AG04450 (cell line): ENCODE measurements at regions of chr3 and their contacts with region 1.

Region 1: DNA sequence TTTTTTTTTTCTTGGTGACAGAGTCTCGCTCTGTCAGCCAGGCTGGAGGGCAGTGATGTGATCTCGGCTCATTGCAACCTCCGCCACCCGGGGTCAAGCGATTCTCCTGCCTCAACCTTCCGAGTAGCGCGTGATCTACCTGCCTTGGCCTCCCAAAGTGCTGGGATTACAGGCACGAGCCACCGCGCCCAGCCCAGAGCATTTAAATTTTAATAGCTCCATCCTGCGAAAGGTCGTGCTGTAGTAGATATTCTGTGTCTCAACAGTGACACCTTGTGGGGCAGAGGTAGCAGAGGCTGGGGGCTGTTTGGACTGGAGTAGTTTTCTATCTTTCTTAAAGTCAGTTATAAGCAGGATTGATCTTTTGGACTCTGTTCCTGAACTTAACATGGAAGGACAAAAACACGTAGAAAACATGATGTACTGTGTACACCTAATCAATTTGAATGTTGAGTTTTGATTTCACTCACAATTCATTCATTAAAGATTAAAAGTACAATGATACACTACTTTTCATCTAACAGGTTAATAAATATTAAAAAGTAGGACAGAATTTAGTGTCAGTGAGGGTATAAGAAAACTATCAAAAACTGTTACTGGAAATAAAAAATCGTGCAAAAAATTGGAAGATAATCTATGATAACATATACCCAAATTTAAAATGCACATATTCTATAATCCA is 11.0 kb upstream of the PDCD6IP start:
- DNase-seq: peak; percentile 32
- H3K4me3 ChIP-seq: peak overlapping the region; percentile 49
- H3K27ac ChIP-seq: no peak overlapping the region
- H3K27me3 ChIP-seq: no peaks in the 10 kb centered on the region
- CTCF ChIP-seq: peak; percentile 88

Region 2: DNA sequence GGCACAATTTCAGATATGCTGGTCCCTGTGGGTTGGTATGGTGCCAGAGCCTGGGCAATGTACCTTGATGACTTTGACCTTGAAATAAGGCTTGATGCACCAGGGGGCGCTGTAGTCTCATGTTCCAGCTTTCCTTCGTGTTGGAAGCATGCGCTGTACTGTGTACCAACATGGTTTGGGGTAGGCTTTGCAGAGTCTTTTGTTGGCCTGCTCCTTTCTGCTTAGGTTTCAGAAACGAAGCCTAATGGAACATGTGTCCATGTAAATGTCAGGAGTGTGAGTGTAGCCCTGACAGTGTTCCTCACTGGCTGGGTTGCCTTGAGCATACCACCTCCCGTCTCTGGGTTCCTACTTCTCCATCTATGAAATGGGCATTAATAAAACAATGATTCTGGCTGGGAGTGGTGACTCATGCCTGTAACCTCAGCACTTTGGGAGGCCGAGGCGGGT is 839.7 kb before region 1 on chr3:
- CTCF ChIA-PET with region 1: interaction called, 15 read pairs
- POLR2A ChIA-PET with region 1: no interaction called
- DNase-seq: peak; percentile 51
- H3K4me3 ChIP-seq: no peak overlapping the region
- H3K27ac ChIP-seq: no peak overlapping the region
- H3K27me3 ChIP-seq: peaks cover 9% of the 10 kb centered on the region
- CTCF ChIP-seq: peak; percentile 84

Region 3: GRCh38 chr3:33385423-33385822 is 402.0 kb before region 1 on chr3:
- CTCF ChIA-PET with region 1: interaction called, 11 read pairs
- POLR2A ChIA-PET with region 1: no interaction called
- DNase-seq: no peak
- H3K4me3 ChIP-seq: no peak overlapping the region
- H3K27ac ChIP-seq: no peak overlapping the region
- H3K27me3 ChIP-seq: no peaks in the 10 kb centered on the region
- CTCF ChIP-seq: no peak

Region 4: GRCh38 chr3:33629219-33629618 is 158.2 kb before region 1 on chr3:
- CTCF ChIA-PET with region 1: interaction called, 22 read pairs
- POLR2A ChIA-PET with region 1: no interaction called
- DNase-seq: no peak
- H3K4me3 ChIP-seq: no peak overlapping the region
- H3K27ac ChIP-seq: no peak overlapping the region
- H3K27me3 ChIP-seq: no peaks in the 10 kb centered on the region
- CTCF ChIP-seq: no peak

Region 5: GRCh38 chr3:33645060-33645647 is 142.3 kb before region 1 on chr3:
- CTCF ChIA-PET with region 1: interaction called, 26 read pairs
- POLR2A ChIA-PET with region 1: no interaction called
- DNase-seq: no peak
- H3K4me3 ChIP-seq: no peak overlapping the region
- H3K27ac ChIP-seq: no peak overlapping the region
- H3K27me3 ChIP-seq: no peaks in the 10 kb centered on the region
- CTCF ChIP-seq: no peak

Region 6: DNA sequence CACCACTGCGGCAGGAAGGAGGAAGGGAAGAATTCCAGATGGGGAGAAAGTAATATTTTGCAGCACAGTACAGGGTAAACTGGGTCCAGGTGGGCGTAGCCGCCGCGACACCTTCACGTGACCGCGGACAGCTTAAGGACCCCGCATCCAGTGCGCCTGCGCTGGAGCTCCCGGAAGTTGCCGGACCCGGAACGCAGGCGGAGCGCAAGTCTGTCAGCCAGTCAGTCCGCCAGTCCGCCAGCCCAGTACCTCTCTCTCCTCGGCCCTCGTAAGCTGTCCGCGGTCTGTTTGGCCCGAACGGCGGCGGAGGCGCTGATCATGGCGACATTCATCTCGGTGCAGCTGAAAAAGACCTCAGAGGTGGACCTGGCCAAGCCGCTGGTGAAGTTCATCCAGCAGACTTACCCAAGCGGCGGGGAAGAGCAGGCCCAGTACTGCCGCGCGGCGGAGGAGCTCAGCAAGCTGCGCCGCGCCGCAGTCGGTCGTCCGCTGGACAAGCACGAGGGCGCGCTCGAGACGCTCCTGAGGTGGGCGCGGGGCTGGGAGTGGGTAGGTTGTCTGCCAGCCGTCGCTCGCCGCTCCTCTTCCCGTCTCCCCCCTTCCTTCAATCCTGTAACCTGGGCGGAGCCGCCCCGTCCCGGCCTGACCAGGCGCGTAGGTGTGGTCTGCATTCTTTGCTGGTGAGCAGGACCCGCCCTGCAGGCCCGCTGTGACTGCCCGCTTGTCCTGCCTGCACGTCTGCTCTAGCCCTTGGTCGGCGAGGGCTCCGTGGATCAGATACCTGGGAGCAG is 11.1 kb after region 1 on chr3 and contains the start of gene PDCD6IP:
- CTCF ChIA-PET with region 1: interaction called, 68 read pairs
- POLR2A ChIA-PET with region 1: interaction called, 3 read pairs
- DNase-seq: peak; percentile 82
- H3K4me3 ChIP-seq: peak within 1 kb of the TSS; percentile 76
- H3K27ac ChIP-seq: peak within 1 kb of the TSS; percentile 96
- H3K27me3 ChIP-seq: no peaks in the 10 kb centered on the region
- CTCF ChIP-seq: peak; percentile 25; the same call in 1 of the 2 replicates
- polyA plus RNA-seq, gene PDCD6IP: 134 and 188 TPM in 2 replicates

Region 7: GRCh38 chr3:33936921-33937525 is 149.6 kb after region 1 on chr3:
- CTCF ChIA-PET with region 1: no interaction called
- POLR2A ChIA-PET with region 1: no interaction called
- DNase-seq: no peak
- H3K4me3 ChIP-seq: no peak overlapping the region
- H3K27ac ChIP-seq: no peak overlapping the region
- H3K27me3 ChIP-seq: peaks cover 4% of the 10 kb centered on the region
- CTCF ChIP-seq: no peak